HEK293 (cell line): ENCODE measurements at regions of chr2 and their contacts with region 1.

Region 1: DNA sequence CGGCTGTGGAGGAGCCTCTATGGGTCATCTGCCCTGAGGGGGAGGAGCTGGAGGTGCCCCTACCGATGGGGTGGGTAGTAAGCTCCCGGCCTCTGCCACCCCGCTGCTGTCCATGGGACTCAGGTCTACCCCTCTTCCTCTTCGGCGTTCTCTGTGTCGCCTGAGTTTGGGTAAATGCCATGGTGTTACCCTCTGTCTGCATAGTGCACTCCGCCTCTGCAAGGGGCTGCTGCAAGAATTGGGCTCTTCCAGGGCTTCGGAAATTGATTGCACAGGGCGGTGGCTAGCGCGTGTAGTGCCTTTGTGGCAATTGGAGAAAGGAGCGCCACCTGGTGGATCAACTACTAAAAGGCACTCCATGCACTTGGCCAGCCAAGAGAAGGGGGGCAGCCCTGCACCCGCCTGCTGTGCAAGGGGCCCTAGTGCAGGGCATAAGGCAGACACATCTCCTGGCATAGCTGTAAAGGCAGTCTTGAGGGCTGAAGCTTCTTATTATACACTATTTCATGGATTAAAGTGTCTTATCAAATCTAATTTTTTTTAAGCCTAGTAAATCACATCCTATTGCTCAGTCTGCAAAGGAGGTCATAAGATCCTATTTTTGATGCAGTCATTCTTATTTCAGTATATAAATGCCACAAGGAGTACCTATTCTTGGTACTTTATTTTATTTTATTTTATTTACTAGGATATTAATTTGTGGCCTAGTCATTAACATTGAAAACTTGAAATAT is 308.9 kb downstream of the PDE11A start:
- H3K4me3 ChIP-seq: no peak overlapping the region
- H3K27ac ChIP-seq: no peak overlapping the region
- H3K4me1 ChIP-seq: no peaks in the 10 kb centered on the region; the same call in 1 of the 2 replicates
- CTCF ChIP-seq: peak; percentile 85

Region 2: DNA sequence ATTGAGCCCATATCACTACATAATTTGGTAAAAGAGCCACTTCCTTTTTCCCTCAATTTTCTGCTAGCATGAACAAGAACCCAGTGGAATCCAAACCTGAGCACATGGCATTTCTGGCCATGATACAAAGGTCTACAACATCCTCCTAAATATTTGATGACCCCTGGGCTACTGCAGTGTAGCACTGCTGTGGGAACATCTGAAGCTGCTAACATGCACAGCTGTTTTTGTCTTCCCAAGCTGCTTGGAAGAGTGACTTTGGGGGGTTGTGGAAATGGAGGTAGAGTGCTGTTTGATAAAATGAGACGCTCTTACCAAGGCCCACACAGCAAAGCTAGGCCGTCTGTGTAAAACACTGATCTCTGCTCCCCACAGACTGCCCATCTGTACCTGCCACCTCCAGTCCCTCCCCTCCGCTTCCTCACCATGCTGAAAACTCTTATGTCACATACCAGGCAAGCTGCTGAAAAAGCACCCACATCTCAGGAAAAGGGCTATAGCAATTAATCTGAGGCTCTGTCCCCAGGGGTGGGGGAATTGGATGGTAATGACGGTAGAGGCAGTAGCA is 748.3 kb before region 1 on chr2:
- CTCF ChIA-PET with region 1: no interaction called
- POLR2A ChIA-PET with region 1: no interaction called
- H3K4me3 ChIP-seq: no peak overlapping the region
- H3K27ac ChIP-seq: no peak overlapping the region
- H3K4me1 ChIP-seq: peaks cover 10% of the 10 kb centered on the region
- CTCF ChIP-seq: no peak

Region 3: DNA sequence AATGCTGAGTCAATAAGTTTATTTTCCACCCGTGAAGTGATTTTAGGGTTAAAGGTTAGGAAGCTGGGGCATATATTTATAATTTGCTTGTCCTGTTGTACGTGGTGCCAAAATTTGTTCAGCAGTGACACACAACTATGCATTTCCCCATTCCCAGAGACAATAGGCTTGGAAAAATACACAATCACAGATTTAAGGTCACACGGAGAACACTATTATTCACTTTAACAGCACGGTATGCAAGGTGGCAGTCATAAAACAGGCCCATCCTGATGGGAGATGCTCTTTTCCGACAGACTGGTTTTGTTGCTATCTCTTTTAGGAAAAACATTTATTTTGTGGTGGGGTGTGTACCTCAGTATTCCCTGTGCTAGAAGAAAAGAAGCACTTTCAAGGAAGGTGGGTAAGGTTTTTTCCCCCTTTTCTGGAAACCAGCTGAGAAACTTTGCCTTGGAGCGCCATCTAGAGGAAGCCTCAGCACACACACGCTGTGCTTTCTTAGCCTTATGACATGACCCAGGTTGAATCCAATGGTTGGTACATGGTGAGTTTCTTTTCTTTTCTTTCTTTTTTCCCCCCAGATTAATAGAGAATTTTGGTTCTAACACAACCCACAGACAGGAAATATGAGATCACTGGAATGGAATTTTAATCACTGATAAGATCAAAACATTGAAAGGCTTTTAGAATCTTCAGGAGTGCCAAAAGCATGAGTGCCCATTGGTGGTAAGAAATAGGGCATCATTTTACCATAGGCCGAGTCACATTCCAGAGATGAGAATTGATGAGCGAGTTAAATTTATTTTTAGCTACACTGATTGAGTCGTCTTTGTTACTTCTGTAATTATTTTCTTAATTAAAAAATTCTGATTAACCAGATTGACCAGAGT is 39.1 kb before region 1 on chr2:
- CTCF ChIA-PET with region 1: interaction called, 11 read pairs
- POLR2A ChIA-PET with region 1: no interaction called
- H3K4me3 ChIP-seq: no peak overlapping the region
- H3K27ac ChIP-seq: no peak overlapping the region
- H3K4me1 ChIP-seq: no peaks in the 10 kb centered on the region; the same call in 1 of the 2 replicates
- CTCF ChIP-seq: peak; percentile 77

Region 4: GRCh38 chr2:177852389-177852788 is 88.7 kb after region 1 on chr2:
- CTCF ChIA-PET with region 1: no interaction called
- POLR2A ChIA-PET with region 1: no interaction called
- H3K4me3 ChIP-seq: no peak overlapping the region
- H3K27ac ChIP-seq: no peak overlapping the region
- H3K4me1 ChIP-seq: no peaks in the 10 kb centered on the region
- CTCF ChIP-seq: no peak

Region 5: GRCh38 chr2:178674122-178674521 is 910.4 kb after region 1 on chr2:
- CTCF ChIA-PET with region 1: no interaction called
- POLR2A ChIA-PET with region 1: no interaction called
- H3K4me3 ChIP-seq: no peak overlapping the region
- H3K27ac ChIP-seq: no peak overlapping the region
- H3K4me1 ChIP-seq: no peaks in the 10 kb centered on the region
- CTCF ChIP-seq: no peak